ENCODE measurements at regions of chr22 and their contacts with region 1.

Region 1: GRCh38 chr22:31970490-31971444 is 26.4 kb downstream of the YWHAH start:
- DNase-seq: peak; percentile 75 to 93
- H3K4me3 ChIP-seq: peak overlapping the region; percentile 43
- H3K4me1 ChIP-seq: peaks cover 7% of the 10 kb centered on the region
- H3K27me3 ChIP-seq: no peaks in the 10 kb centered on the region

Region 2: DNA sequence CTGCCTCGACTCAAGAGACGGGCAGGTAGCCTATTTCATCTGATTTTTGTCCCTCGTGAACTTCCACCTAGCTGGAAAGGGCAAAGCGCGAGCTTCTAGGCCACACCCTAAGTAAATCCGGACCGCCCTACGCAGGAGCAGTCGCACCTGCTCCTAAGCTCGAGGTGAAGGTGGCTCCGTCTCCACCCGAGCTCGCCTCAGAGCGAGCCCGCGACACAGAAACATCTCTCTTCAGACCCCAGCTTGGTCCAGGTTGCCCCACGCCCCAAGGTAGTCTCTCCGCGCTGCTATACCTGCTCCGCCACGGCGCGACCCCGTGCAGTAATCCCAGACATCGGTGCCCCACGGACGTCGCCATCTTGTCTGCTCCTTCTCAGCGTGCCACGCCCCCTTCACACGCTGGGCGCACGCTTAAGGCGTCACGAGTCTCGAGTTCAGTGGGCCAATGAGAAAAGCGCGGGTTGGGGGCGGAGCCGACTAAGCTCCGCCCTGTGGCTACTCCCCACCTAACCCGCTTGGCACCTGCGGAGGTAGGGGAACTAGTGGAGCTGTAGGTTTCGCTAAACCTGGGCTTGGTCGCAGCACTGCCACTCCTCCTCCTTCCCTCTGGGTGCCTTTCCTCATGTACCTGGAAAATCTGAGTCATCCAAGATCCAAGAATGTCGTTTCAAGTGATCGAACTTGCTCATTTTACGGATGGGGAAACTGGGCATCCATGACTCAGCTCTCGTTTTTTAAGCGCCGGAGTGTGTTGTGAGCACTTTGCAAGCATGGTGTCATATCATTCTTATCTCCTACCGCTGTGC is 308.7 kb before region 1 on chr22 and contains the start of gene PISD:
- in situ Hi-C with region 1: loop called (anchors 5 kb)
- DNase-seq: peak; percentile 91 to 96
- H3K4me3 ChIP-seq: peak within 1 kb of the TSS; percentile 92
- H3K4me1 ChIP-seq: peaks cover 10% of the 10 kb centered on the region
- H3K27me3 ChIP-seq: no peaks in the 10 kb centered on the region

Region 3: GRCh38 chr22:32080904-32081303 is 110.1 kb after region 1 on chr22:
- in situ Hi-C with region 1: loop called (anchors 10 kb)
- DNase-seq: peak; percentile 42 to 70
- H3K4me3 ChIP-seq: no peak overlapping the region
- H3K4me1 ChIP-seq: no peaks in the 10 kb centered on the region; the same call in 1 of the 2 replicates
- H3K27me3 ChIP-seq: peaks cover 9% of the 10 kb centered on the region

Region 4: DNA sequence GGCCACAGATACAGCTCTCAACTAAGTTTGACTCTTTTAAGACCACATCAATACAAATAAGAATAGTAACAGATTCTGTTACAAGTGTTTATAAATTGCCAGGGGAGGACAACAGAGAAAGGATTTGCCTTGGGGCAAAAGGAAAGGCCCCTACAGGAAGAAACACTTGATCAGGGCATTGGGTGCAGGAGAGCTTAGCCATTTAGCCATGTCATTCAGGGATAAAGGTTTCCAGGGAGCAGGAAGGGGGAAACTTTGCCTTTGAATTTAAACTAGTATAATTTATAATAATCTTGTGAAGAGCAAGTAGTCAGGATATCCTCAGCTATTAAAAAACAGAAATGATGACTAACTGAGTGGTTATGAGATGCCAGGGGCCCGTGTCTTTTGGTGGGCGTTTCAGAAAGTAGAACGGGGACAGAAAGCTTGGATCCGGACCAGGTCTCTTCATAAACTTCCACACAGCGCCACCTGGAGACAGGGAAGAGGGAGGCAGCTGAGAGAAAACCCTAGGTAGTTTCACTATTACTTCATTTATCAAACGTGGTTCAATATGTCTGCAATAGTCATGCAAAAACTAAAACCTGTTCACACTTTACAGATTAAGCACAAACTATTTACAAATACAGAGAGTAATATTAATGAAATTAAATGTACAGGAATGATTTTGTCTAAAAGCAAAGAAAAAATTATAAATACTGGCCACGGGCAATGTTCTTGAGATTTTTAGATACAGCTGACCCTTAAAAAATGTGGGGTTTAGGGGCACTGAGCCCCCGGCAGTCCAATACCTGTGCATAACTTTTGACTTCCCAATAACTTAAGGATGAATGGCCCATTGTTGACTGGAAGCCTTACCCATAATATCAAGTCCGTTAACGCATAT is 295.4 kb after region 1 on chr22:
- in situ Hi-C with region 1: loop called (anchors 10 kb)
- DNase-seq: peak; percentile 39 to 76
- H3K4me3 ChIP-seq: no peak overlapping the region
- H3K4me1 ChIP-seq: no peaks in the 10 kb centered on the region; the same call in 1 of the 2 replicates
- H3K27me3 ChIP-seq: no peaks in the 10 kb centered on the region

Region 5: DNA sequence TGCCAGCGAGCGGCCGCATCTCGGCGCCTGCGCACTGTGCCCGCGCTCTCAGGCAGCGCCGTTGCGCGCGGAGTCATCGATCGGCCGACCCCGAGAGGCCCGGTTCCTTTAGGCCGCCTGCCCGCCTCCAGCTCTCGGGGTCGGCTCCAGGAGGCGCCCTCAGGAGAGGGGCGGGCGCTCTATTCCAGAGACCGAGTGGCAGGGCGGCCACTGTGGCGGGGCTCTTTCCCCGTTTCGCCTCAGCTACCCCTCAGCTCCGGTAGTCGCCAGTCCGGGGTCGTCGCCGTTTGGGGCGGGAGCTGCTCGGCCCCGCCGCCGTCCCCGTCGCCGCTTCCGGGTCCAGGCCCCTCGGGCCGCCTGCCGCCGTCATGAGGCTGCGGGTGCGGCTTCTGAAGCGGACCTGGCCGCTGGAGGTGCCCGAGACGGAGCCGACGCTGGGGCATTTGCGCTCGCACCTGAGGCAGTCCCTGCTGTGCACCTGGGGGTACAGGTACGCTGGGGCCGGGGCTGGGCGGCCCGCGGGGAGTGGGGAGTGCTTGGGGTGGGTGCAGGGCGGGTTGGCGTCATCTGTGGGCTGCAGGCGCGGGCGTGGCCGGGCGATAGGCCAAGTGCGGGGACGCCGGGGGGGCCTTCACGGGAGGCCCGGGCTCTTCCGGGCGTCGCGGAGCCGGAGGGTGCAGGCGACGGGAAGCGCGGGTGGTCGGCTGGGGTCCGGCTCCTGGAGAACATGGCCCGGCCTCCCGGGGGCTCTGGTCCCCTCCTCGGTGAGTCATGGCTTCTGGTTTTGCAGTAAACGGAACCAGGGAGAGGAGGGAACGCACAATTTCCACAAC is 504.1 kb after region 1 on chr22 and contains the start of gene FBXO7:
- in situ Hi-C with region 1: loop called (anchors 10 kb)
- DNase-seq: peak; percentile 78 to 93
- H3K4me3 ChIP-seq: peak within 1 kb of the TSS; percentile 76
- H3K4me1 ChIP-seq: peaks cover 8% of the 10 kb centered on the region
- H3K27me3 ChIP-seq: peaks cover 8% of the 10 kb centered on the region

Measured in HAP-1 (cell line).